ENCODE measurements at regions of chr1 and their contacts with region 1.

Region 1: DNA sequence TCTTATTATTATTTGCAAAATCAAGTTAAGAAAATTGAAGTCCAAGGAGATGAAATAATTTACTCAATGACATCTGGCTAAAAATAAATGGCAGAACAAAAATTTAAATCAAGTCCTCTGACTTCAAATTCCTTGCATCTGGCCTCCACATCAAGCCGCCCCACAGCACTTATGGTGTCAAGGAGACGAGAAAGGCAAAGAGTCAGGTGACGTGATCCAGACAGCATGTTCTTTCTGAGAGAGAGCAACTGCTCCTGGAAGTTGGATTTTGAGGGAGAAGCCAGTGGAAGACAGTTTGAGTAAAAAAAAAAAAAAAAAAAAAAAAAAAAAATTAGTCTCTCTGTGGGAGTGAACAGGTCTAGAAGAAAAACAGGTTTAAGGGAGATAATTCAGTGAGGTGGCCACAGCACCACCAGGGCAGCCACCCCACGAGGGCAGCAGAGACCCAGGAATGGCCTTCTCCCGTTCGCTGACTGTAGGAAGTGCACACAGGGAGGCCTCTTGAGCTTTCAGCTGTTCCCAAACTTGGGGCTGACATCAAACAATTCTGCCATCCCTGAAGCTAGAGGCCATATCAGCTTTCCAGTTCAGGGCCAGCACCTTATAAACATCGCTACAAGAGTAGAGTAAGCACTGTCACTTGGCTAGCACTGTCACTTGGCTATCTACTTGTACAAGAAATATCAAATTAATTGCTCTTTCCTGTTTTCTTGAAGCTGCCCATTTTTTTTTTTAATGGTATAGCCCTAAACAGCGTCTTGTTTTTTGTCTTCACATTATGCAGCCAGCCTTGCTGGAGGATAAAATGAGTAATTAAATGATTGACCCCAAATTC is 7.8 kb downstream of the C1orf162 start:
- DNase-seq: peak; percentile 17 to 79 (median 56)
- ATAC-seq: peak; percentile 40
- H3K4me3 ChIP-seq: no peak overlapping the region
- H3K4me3 Mint-ChIP-seq: peak overlapping the region; percentile 55
- H3K27ac ChIP-seq: no peak overlapping the region
- H3K27ac Mint-ChIP-seq: no peak overlapping the region
- H3K4me1 ChIP-seq: peaks cover 30% of the 10 kb centered on the region
- H3K4me1 Mint-ChIP-seq: peaks cover 62% of the 10 kb centered on the region
- H3K27me3 ChIP-seq: no peaks in the 10 kb centered on the region
- H3K27me3 Mint-ChIP-seq: no peaks in the 10 kb centered on the region
- CTCF ChIP-seq: peak; percentile 51

Region 2: GRCh38 chr1:111465754-111466153 is 15.8 kb before region 1 on chr1:
- CTCF ChIA-PET with region 1: no interaction called
- POLR2A ChIA-PET with region 1: interaction called, 11 read pairs
- intact Hi-C with region 1: no loop called
- DNase-seq: no peak
- ATAC-seq: no peak
- H3K4me3 ChIP-seq: no peak overlapping the region
- H3K4me3 Mint-ChIP-seq: no peak overlapping the region
- H3K27ac ChIP-seq: no peak overlapping the region
- H3K27ac Mint-ChIP-seq: no peak overlapping the region
- H3K4me1 ChIP-seq: peaks cover 19% of the 10 kb centered on the region
- H3K4me1 Mint-ChIP-seq: peaks cover 23% of the 10 kb centered on the region
- H3K27me3 ChIP-seq: no peaks in the 10 kb centered on the region
- H3K27me3 Mint-ChIP-seq: no peaks in the 10 kb centered on the region
- CTCF ChIP-seq: no peak

Region 3: GRCh38 chr1:111709986-111710385 is 228.4 kb after region 1 on chr1:
- CTCF ChIA-PET with region 1: interaction called, 3 read pairs
- POLR2A ChIA-PET with region 1: no interaction called
- intact Hi-C with region 1: loop called in 1 of 2 experiments (anchors 5 kb)
- DNase-seq: no peak
- ATAC-seq: no peak
- H3K4me3 ChIP-seq: no peak overlapping the region
- H3K4me3 Mint-ChIP-seq: no peak overlapping the region
- H3K27ac ChIP-seq: no peak overlapping the region
- H3K27ac Mint-ChIP-seq: peak overlapping the region; percentile 2
- H3K4me1 ChIP-seq: no peaks in the 10 kb centered on the region
- H3K4me1 Mint-ChIP-seq: peaks cover 9% of the 10 kb centered on the region
- H3K27me3 ChIP-seq: no peaks in the 10 kb centered on the region
- H3K27me3 Mint-ChIP-seq: no peaks in the 10 kb centered on the region
- CTCF ChIP-seq: no peak

Region 4: GRCh38 chr1:111747282-111747734 is 265.7 kb after region 1 on chr1:
- CTCF ChIA-PET with region 1: no interaction called
- POLR2A ChIA-PET with region 1: no interaction called
- intact Hi-C with region 1: loop called in 1 of 2 experiments (anchors 2 kb)
- DNase-seq: peak; percentile 19 to 86 (median 45)
- ATAC-seq: peak; percentile 66
- H3K4me3 ChIP-seq: no peak overlapping the region
- H3K4me3 Mint-ChIP-seq: no peak overlapping the region
- H3K27ac ChIP-seq: no peak overlapping the region
- H3K27ac Mint-ChIP-seq: no peak overlapping the region
- H3K4me1 ChIP-seq: no peaks in the 10 kb centered on the region
- H3K4me1 Mint-ChIP-seq: no peaks in the 10 kb centered on the region
- H3K27me3 ChIP-seq: no peaks in the 10 kb centered on the region
- H3K27me3 Mint-ChIP-seq: no peaks in the 10 kb centered on the region
- CTCF ChIP-seq: peak; percentile 49

Region 5: DNA sequence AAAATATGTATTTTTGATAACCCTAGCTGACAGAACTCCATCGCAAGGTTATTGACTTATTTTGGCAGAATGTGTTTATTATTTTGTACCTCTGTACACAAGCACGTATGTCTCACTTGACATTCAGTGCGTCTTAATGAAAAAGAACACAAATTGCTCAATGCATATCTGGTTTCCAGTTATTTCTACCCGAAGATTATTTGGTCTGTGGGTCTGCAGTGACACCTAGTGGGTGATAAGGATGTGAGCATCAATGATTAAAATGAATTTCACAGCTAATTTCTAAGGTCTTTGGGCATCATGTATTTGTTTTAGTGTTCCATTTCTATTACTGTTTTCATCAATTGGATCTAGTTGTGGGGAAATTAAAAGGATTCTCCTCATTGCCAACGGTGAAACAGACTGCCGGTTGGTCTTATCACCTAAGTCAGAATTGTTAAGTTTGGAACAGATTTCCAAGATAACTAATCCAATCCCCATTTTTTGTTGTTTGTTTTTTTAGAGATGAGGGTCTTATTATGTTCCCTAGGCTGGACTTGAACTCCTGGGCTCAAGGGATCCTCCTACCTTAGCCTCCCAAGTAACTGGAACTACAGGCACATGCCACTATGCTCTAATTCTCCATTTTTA is 288.0 kb after region 1 on chr1:
- CTCF ChIA-PET with region 1: interaction called, 10 read pairs
- POLR2A ChIA-PET with region 1: no interaction called
- intact Hi-C with region 1: loop called (anchors 2 to 10 kb)
- DNase-seq: peak in 12 of 14 experiments; percentile 11 to 84 (median 42)
- ATAC-seq: peak; percentile 68
- H3K4me3 ChIP-seq: no peak overlapping the region
- H3K4me3 Mint-ChIP-seq: no peak overlapping the region
- H3K27ac ChIP-seq: no peak overlapping the region
- H3K27ac Mint-ChIP-seq: peak overlapping the region; percentile 40
- H3K4me1 ChIP-seq: no peaks in the 10 kb centered on the region
- H3K4me1 Mint-ChIP-seq: peaks cover 9% of the 10 kb centered on the region
- H3K27me3 ChIP-seq: no peaks in the 10 kb centered on the region
- H3K27me3 Mint-ChIP-seq: no peaks in the 10 kb centered on the region
- CTCF ChIP-seq: peak; percentile 82

Region 6: DNA sequence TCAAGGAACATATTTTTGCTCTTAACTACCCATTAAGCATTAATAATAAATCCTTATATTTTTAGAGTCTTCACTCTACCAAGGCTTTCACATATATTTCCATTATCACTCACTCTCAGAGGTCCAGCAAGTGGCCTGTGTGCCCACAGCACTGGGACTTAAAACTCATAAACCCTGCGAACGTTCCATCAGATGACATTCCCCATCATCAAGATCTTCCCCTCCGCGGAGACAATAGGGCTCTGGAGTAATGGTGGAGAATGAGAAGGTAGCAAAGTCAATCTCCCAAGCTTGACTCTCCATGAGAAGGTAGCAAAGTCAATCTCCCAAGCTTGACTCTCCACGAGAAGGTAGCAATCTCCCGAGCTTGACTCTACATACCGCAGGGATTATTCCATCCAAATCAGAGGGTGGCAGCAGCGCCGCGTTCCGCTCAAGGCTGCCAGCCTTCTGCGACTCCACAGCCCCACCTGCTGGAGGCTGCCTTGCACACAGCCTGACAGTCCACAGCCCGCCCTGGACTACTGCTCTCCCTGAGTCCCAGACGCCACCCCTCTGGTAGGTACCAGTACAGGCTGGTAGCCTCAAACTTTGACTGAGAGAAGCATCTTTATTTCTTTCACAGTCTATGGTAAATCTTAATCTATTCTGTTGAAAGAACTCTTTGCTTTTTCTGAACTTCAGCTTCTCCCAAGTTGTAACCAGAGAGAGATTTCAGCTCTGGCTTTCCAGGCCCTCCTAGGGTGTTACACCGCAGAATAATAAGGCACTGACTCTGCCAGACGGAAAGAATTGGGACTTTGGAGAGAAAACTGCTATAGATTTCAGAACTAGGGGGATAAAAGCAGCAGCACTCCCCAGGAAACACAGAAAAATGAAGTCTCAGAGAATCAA is 888.0 kb after region 1 on chr1:
- CTCF ChIA-PET with region 1: no interaction called
- POLR2A ChIA-PET with region 1: no interaction called
- intact Hi-C with region 1: loop called in 1 of 2 experiments (anchors 5 kb)
- DNase-seq: peak; percentile 71 to 89 (median 78)
- ATAC-seq: peak; percentile 100
- H3K4me3 ChIP-seq: no peak overlapping the region
- H3K4me3 Mint-ChIP-seq: no peak overlapping the region
- H3K27ac ChIP-seq: no peak overlapping the region
- H3K27ac Mint-ChIP-seq: no peak overlapping the region
- H3K4me1 ChIP-seq: peaks cover 4% of the 10 kb centered on the region
- H3K4me1 Mint-ChIP-seq: peaks cover 5% of the 10 kb centered on the region
- H3K27me3 ChIP-seq: peaks cover 20 to 27% of the 10 kb centered on the region in 2 experiments
- H3K27me3 Mint-ChIP-seq: peaks cover 53% of the 10 kb centered on the region
- CTCF ChIP-seq: peak; percentile 98

Measured in CD4-positive, alpha-beta T cell (primary cell).